Heart right ventricle (tissue), 16 donors: ENCODE measurements at regions of chr20 and their contacts with region 1.

Region 1: DNA sequence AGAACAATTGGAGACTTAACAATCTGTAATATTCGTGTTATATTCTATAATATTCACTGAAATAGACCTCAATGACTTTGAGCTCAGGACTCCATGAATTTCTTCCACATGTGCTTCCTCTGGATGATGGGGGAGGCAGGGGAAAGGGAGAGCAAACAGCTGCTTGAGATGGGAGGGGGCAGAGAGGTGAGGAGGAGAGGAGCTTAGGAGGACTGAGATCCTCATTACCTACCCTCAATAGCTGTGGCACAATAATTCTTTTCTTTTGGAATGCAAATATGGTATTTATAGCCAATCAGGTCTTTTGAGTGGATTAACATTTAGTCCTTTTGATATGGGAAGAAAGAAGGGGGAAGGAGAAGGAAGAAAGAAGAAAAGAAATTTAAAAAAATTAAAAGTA is 64.1 kb upstream of the ZNF217 start:
- DNase-seq: no peak
- ATAC-seq: no peak
- H3K4me3 ChIP-seq: no peak overlapping the region
- H3K27ac ChIP-seq: peak overlapping the region in 3 of 10 donors; percentile 27 to 72 (median 28)
- H3K4me1 ChIP-seq: peaks cover 2 to 84% (median 37%) of the 10 kb centered on the region in 9 donors
- H3K27me3 ChIP-seq: no peaks in the 10 kb centered on the region
- CTCF ChIP-seq: no peak

Region 2: GRCh38 chr20:53493311-53493864 is 164.3 kb before region 1 on chr20:
- intact Hi-C with region 1: no loop called
- DNase-seq: no peak
- ATAC-seq: no peak
- H3K4me3 ChIP-seq: no peak overlapping the region
- H3K27ac ChIP-seq: no peak overlapping the region
- H3K4me1 ChIP-seq: peaks cover 0 to 25% (median 5%) of the 10 kb centered on the region in 9 donors
- H3K27me3 ChIP-seq: peaks cover 0 to 4% (median 0%) of the 10 kb centered on the region in 7 donors
- CTCF ChIP-seq: peak in 7 of 9 donors; percentile 18 to 50 (median 29)

Region 3: DNA sequence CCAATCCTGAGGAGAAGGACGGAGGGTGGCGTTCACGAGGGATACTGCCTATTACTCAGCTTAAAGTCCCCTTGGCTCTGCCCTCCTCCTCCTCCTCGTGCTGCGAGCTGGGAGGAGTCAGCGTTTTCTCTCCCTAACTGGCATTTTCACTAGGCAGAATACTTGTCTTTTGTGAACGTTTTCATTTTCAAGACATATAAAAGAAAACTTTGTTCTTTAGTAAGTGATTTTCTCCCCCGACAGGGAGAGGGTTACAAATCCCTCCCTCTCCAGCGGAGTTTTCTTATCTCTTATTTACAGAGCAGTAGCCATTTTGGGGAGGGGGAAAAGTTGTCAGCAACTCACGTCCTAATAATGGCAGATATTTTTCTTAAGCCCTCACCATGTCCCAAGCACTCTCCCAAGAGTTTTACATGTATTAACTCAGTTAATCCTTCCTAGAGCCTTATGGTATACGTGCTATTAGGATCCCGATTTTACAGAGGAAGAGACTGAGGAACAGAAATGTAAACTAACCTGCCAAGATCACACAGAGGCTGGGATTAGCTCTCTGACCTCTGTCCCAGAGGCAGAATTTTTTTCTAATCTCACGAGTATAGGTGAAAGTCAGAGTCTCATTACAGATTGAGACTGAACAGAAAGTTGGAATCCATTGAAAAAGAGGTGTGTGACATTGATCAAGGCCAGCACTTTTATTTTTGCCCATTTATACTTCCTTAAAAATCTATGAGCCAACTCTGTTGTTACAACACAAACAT is 34.1 kb before region 1 on chr20:
- intact Hi-C with region 1: loop called in 2 of 10 experiments (anchors 2 to 5 kb)
- DNase-seq: peak; percentile 40 to 73
- ATAC-seq: peak; percentile 88 to 94 (median 92)
- H3K4me3 ChIP-seq: peak overlapping the region in 9 of 10 donors; percentile 14 to 54 (median 47)
- H3K27ac ChIP-seq: peak overlapping the region; percentile 32 to 97 (median 85)
- H3K4me1 ChIP-seq: peaks cover 0 to 54% (median 36%) of the 10 kb centered on the region in 9 donors
- H3K27me3 ChIP-seq: no peaks in the 10 kb centered on the region
- CTCF ChIP-seq: peak in 2 of 9 donors; percentile 16 to 39